Posterior vena cava (tissue), 2 donors: ENCODE measurements at regions of chrX and their contacts with region 1.

Region 1: DNA sequence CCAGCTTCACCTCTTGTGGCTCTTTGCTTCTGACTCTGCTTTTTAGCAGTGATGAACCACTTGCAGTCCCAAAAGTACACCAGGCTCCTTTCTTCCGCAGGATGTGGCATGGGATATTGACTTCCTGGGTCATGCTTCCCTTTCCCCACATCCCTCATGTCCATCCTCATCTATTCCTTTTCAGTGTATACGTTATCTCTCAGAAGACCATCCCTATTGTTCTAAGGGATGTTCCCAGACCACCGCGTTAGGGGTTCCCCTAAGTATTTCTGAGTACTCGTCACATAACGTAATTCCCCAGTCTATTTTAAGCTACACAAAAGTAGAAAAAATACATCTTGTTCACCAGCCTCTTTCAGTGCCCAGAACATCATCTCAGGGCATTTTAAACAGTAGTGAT is 71.1 kb upstream of the NLGN4X start:
- DNase-seq: no peak

Region 2: GRCh38 chrX:4964112-4964511 is 1335.6 kb before region 1 on chrX:
- intact Hi-C with region 1: loop called in 1 of 2 experiments (anchors 5 kb)
- DNase-seq: no peak